ENCODE measurements at regions of chr3 and their contacts with region 1.

Region 1: GRCh38 chr3:188788621-188789081 is 383.1 kb upstream of the TPRG1 start:
- DNase-seq: peak; percentile 89
- ATAC-seq: peak; percentile 97
- H3K4me3 Mint-ChIP-seq: no peak overlapping the region
- H3K27ac Mint-ChIP-seq: no peak overlapping the region
- H3K4me1 Mint-ChIP-seq: peaks cover 2% of the 10 kb centered on the region
- H3K27me3 Mint-ChIP-seq: no peaks in the 10 kb centered on the region

Region 2: GRCh38 chr3:187802928-187803259 is 985.8 kb before region 1 on chr3:
- CTCF ChIA-PET with region 1: no interaction called
- POLR2A ChIA-PET with region 1: no interaction called
- intact Hi-C with region 1: loop called in 1 of 2 experiments (anchors 10 kb)
- DNase-seq: peak; percentile 86
- ATAC-seq: peak; percentile 60
- H3K4me3 Mint-ChIP-seq: peak overlapping the region; percentile 34
- H3K27ac Mint-ChIP-seq: peak overlapping the region; percentile 81
- H3K4me1 Mint-ChIP-seq: peaks cover 93% of the 10 kb centered on the region
- H3K27me3 Mint-ChIP-seq: no peaks in the 10 kb centered on the region

Region 3: GRCh38 chr3:188286087-188286513 is 502.6 kb before region 1 on chr3:
- CTCF ChIA-PET with region 1: no interaction called
- POLR2A ChIA-PET with region 1: interaction called, 4 read pairs
- intact Hi-C with region 1: loop called (anchors 1 kb)
- DNase-seq: peak; percentile 29
- ATAC-seq: no peak
- H3K4me3 Mint-ChIP-seq: no peak overlapping the region
- H3K27ac Mint-ChIP-seq: peak overlapping the region; percentile 72
- H3K4me1 Mint-ChIP-seq: peaks cover 55% of the 10 kb centered on the region
- H3K27me3 Mint-ChIP-seq: no peaks in the 10 kb centered on the region

Region 4: DNA sequence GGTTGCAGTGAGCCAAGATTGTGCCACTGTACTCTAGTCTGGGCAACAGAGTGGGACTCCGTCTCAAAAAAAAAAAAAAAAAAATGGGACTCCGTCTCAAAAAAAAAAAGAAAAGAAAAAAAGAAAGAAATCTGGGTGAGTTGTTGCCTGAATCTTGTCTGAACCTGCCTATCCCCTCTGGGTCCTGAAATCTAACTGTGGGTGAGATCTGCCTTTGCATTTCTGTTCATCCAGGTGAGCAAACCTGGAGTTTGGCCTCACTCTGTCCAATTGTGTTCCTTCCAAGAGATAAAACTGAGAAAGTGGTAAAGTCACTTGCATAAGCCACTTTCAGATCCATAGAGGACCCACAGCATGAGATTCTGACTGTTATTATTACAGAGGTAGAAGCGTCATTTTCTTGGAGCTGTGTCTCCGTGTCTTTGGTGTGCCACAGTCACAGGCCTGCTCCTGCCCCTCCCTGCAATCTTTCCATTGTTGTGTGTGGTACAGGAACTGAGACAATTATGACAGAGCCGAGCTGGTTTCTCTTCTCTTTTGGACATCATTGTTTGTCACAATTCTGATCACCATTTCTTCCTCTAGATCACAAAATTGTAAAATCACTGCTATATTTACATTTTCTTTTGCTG is 398.8 kb before region 1 on chr3:
- CTCF ChIA-PET with region 1: no interaction called
- POLR2A ChIA-PET with region 1: no interaction called
- intact Hi-C with region 1: loop called in 1 of 2 experiments (anchors 1 kb)
- DNase-seq: peak; percentile 81
- ATAC-seq: peak; percentile 92
- H3K4me3 Mint-ChIP-seq: peak overlapping the region; percentile 22
- H3K27ac Mint-ChIP-seq: peak overlapping the region; percentile 78
- H3K4me1 Mint-ChIP-seq: peaks cover 41% of the 10 kb centered on the region
- H3K27me3 Mint-ChIP-seq: no peaks in the 10 kb centered on the region

Region 5: GRCh38 chr3:188720636-188721035 is 68.0 kb before region 1 on chr3:
- CTCF ChIA-PET with region 1: no interaction called
- POLR2A ChIA-PET with region 1: no interaction called
- intact Hi-C with region 1: loop called (anchors 1 to 2 kb)
- DNase-seq: no peak
- ATAC-seq: peak; percentile 83
- H3K4me3 Mint-ChIP-seq: no peak overlapping the region
- H3K27ac Mint-ChIP-seq: no peak overlapping the region
- H3K4me1 Mint-ChIP-seq: peaks cover 37% of the 10 kb centered on the region
- H3K27me3 Mint-ChIP-seq: peaks cover 9% of the 10 kb centered on the region

Region 6: DNA sequence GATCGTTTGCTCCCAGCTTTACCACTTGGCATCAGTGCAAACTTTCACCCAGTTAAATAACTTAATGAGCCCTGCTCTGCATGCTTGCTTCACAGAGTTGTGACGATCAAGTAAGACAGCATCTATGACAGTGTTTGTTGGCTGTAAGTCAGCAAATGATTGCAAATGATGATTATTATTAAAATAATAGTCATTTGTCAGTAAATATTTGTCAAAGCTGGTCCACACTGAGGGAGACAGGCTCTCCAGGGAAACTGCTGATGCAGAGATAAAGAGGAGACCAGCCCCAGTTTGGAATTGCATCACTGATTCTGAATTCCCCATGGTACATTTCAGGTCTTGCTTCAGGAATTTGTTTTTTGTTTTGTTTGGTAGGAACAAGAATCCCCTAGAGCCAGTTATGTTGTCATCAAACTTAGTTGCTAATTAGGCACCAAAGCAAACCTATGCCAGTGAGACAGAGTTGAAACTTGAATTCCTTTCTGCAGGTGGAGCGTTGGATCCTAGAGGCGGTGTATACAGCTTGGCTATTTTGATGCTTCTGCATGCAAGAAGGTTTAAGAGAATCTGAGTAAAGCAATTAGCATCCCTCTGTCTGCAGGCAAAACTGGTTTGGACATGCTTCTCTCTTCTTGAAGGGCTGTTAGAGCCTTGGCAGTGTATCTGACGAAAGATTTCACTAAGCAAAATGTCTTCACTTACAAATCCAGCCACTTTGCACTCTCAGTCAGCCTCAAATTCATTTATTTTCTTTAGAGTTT is 44.5 kb after region 1 on chr3:
- CTCF ChIA-PET with region 1: no interaction called
- POLR2A ChIA-PET with region 1: no interaction called
- intact Hi-C with region 1: no loop called
- DNase-seq: no peak
- ATAC-seq: no peak
- H3K4me3 Mint-ChIP-seq: no peak overlapping the region
- H3K27ac Mint-ChIP-seq: no peak overlapping the region
- H3K4me1 Mint-ChIP-seq: peaks cover 14% of the 10 kb centered on the region
- H3K27me3 Mint-ChIP-seq: no peaks in the 10 kb centered on the region

Region 7: DNA sequence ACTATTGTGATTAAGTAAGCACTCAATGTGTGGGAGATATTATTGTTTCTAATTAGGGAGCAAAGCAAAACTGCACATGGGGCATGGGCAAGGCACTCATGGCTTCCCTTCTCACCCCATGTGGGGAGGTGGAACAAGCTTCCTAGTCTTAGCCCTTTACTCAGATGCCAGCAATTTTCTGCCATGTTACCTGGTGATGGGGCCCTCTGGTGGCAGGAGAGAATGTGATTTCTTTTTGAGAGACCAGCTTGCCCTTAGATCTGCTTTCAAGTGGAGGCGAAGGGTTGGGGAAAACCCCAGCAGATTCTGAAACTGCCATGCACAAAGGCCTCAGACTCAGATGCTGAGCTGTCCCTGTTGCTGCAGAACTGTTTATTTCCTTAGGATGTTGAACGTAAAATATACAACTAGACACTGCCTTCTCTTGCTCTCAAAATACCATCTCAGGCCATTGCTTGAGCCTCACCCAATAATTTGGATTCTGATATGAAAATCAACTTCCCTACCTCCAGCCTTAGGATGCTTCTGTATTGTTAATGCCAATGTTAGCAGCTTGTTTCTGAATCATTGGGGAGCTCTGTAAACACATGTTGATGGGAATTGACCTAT is 252.9 kb after region 1 on chr3:
- CTCF ChIA-PET with region 1: interaction called, 5 read pairs
- POLR2A ChIA-PET with region 1: interaction called, 3 read pairs
- intact Hi-C with region 1: loop called (anchors 1 kb)
- DNase-seq: peak; percentile 87
- ATAC-seq: peak; percentile 93
- H3K4me3 Mint-ChIP-seq: no peak overlapping the region
- H3K27ac Mint-ChIP-seq: no peak overlapping the region
- H3K4me1 Mint-ChIP-seq: peaks cover 36% of the 10 kb centered on the region
- H3K27me3 Mint-ChIP-seq: peaks cover 6% of the 10 kb centered on the region